CD4-positive, alpha-beta T cell (primary cell): ENCODE measurements at regions of chr3 and their contacts with region 1.

Region 1: GRCh38 chr3:23945903-23946751 is 1.0 kb downstream of the NR1D2 start:
- DNase-seq: peak; percentile 94 to 99 (median 98)
- ATAC-seq: peak; percentile 74
- H3K4me3 ChIP-seq: peak overlapping the region; percentile 95
- H3K4me3 Mint-ChIP-seq: peak overlapping the region; percentile 89
- H3K27ac ChIP-seq: peak overlapping the region; percentile 78 to 92
- H3K27ac Mint-ChIP-seq: peak overlapping the region; percentile 92
- H3K4me1 ChIP-seq: peaks cover 36% of the 10 kb centered on the region
- H3K4me1 Mint-ChIP-seq: peaks cover 58% of the 10 kb centered on the region
- H3K27me3 ChIP-seq: no peaks in the 10 kb centered on the region
- H3K27me3 Mint-ChIP-seq: no peaks in the 10 kb centered on the region
- CTCF ChIP-seq: no peak

Region 2: GRCh38 chr3:23202921-23203707 is 743.0 kb before region 1 on chr3 and contains the start of gene UBE2E2:
- CTCF ChIA-PET with region 1: no interaction called
- POLR2A ChIA-PET with region 1: no interaction called
- intact Hi-C with region 1: loop called in 1 of 2 experiments (anchors 10 kb)
- DNase-seq: peak; percentile 17 to 82 (median 45)
- ATAC-seq: peak; percentile 66
- H3K4me3 ChIP-seq: peak within 1 kb of the TSS; percentile 73
- H3K4me3 Mint-ChIP-seq: peak within 1 kb of the TSS; percentile 97
- H3K27ac ChIP-seq: peak within 1 kb of the TSS in 1 of 2 donors; percentile 18
- H3K27ac Mint-ChIP-seq: peak within 1 kb of the TSS; percentile 86
- H3K4me1 ChIP-seq: peaks cover 10% of the 10 kb centered on the region
- H3K4me1 Mint-ChIP-seq: peaks cover 33% of the 10 kb centered on the region
- H3K27me3 ChIP-seq: peaks cover 0 to 2% of the 10 kb centered on the region in 2 experiments
- H3K27me3 Mint-ChIP-seq: peaks cover 15% of the 10 kb centered on the region
- CTCF ChIP-seq: no peak
- total RNA-seq, gene UBE2E2: 14.1 to 20.2 TPM

Region 3: GRCh38 chr3:23805633-23806533 is 140.2 kb before region 1 on chr3 and contains the start of gene UBE2E1:
- CTCF ChIA-PET with region 1: no interaction called
- POLR2A ChIA-PET with region 1: interaction called, 5 read pairs
- intact Hi-C with region 1: loop called (anchors 1 to 5 kb)
- DNase-seq: peak; percentile 62 to 93 (median 70)
- ATAC-seq: peak; percentile 85
- H3K4me3 ChIP-seq: peak within 1 kb of the TSS; percentile 66
- H3K4me3 Mint-ChIP-seq: peak within 1 kb of the TSS; percentile 99
- H3K27ac ChIP-seq: peak within 1 kb of the TSS in 1 of 2 donors; percentile 64
- H3K27ac Mint-ChIP-seq: peak within 1 kb of the TSS; percentile 91
- H3K4me1 ChIP-seq: peaks cover 32% of the 10 kb centered on the region
- H3K4me1 Mint-ChIP-seq: peaks cover 47% of the 10 kb centered on the region
- H3K27me3 ChIP-seq: no peaks in the 10 kb centered on the region
- H3K27me3 Mint-ChIP-seq: no peaks in the 10 kb centered on the region
- CTCF ChIP-seq: no peak
- total RNA-seq, gene UBE2E1: 49.8 to 52.2 TPM

Region 4: DNA sequence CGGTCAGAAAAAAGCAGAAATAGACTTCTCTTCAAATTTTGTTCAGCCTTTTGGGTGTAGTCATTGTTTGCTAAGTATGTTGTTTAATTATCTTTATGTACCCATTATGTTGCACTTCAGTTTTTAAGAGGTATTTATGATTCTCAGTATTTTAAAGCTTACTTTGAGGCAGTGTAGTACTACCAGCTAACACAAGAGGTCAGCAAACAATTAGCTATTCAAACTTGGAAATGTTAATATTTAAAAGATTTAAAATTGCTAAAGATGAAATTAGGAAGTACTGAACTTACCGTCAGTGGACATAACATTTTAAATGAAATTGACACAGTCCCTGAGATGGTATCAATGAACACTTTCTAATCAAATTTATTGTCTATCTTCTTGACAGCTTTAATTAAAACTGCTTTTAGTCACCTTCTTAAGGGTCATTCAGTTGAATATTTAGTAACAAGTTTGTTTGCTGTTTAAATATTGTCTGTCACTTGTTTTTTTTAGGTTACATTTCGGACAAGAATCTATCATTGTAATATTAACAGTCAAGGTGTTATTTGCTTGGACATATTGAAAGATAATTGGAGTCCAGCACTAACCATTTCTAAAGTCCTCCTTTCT is 57.4 kb before region 1 on chr3:
- CTCF ChIA-PET with region 1: no interaction called
- POLR2A ChIA-PET with region 1: interaction called, 3 read pairs
- intact Hi-C with region 1: loop called in 1 of 2 experiments (anchors 2 kb)
- DNase-seq: peak in 4 of 14 experiments; percentile 21 to 68 (median 51)
- ATAC-seq: peak; percentile 51
- H3K4me3 ChIP-seq: no peak overlapping the region
- H3K4me3 Mint-ChIP-seq: no peak overlapping the region
- H3K27ac ChIP-seq: no peak overlapping the region
- H3K27ac Mint-ChIP-seq: peak overlapping the region; percentile 32
- H3K4me1 ChIP-seq: no peaks in the 10 kb centered on the region
- H3K4me1 Mint-ChIP-seq: no peaks in the 10 kb centered on the region
- H3K27me3 ChIP-seq: no peaks in the 10 kb centered on the region
- H3K27me3 Mint-ChIP-seq: no peaks in the 10 kb centered on the region
- CTCF ChIP-seq: peak; percentile 88

Region 5: DNA sequence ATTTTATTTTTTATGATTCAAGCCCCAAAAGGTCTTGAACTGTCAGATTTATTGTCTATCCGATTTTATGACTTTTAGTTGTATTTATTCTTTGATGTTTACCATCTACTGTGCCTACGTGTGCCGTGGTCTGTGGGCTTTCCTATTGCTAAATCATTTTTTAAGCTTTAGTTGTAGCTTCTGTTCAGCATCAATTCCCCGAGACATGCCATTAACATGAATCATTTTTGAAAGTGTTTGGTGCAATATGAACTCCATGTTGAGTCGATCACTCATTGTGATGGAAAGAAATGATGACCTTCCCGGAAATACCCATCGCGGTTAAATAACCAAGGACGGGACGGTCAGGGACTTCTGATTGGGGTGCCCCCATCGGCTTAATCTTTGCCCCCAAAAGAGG is 817.3 kb after region 1 on chr3:
- CTCF ChIA-PET with region 1: no interaction called
- POLR2A ChIA-PET with region 1: no interaction called
- intact Hi-C with region 1: no loop called
- DNase-seq: no peak
- ATAC-seq: no peak
- H3K4me3 ChIP-seq: no peak overlapping the region
- H3K4me3 Mint-ChIP-seq: no peak overlapping the region
- H3K27ac ChIP-seq: no peak overlapping the region
- H3K27ac Mint-ChIP-seq: no peak overlapping the region
- H3K4me1 ChIP-seq: no peaks in the 10 kb centered on the region
- H3K4me1 Mint-ChIP-seq: no peaks in the 10 kb centered on the region
- H3K27me3 ChIP-seq: no peaks in the 10 kb centered on the region
- H3K27me3 Mint-ChIP-seq: no peaks in the 10 kb centered on the region
- CTCF ChIP-seq: no peak

Region 6: GRCh38 chr3:25789596-25790556 is 1843.7 kb after region 1 on chr3 and contains the start of gene OXSM:
- CTCF ChIA-PET with region 1: no interaction called
- POLR2A ChIA-PET with region 1: no interaction called
- intact Hi-C with region 1: loop called in 1 of 2 experiments (anchors 10 kb)
- DNase-seq: peak; percentile 78 to 98 (median 86)
- ATAC-seq: peak; percentile 92
- H3K4me3 ChIP-seq: peak within 1 kb of the TSS; percentile 75
- H3K4me3 Mint-ChIP-seq: peak within 1 kb of the TSS; percentile 98
- H3K27ac ChIP-seq: peak within 1 kb of the TSS; percentile 83 to 91
- H3K27ac Mint-ChIP-seq: peak within 1 kb of the TSS; percentile 94
- H3K4me1 ChIP-seq: peaks cover 15% of the 10 kb centered on the region
- H3K4me1 Mint-ChIP-seq: peaks cover 56% of the 10 kb centered on the region
- H3K27me3 ChIP-seq: no peaks in the 10 kb centered on the region
- H3K27me3 Mint-ChIP-seq: no peaks in the 10 kb centered on the region
- CTCF ChIP-seq: no peak
- total RNA-seq, gene OXSM: 6.2 to 7.9 TPM